OCI-LY7 (cell line): ENCODE measurements at regions of chr14 and their contacts with region 1.

Region 1: DNA sequence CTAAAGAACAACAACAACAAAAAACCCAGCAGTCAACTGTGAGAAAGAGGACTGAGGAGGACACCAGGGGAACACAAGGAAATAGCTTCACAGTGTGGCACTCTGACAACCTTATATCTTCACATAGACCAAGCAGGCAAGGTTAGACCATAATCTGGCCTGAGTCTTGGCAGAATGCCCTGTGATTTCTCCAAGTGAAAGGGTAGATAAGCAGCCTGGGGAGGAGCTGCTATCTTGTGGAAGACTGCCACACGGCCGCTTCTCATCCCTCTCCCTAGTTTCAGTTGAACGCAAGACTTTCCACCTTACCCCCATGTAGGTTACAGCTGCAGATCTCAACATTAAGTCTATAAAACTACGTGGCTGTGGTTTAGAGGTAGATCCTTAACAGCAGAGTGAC is 3.7 kb downstream of the SLC25A21 start:
- DNase-seq: no peak
- H3K4me3 ChIP-seq: no peak overlapping the region
- H3K27ac ChIP-seq: no peak overlapping the region
- H3K4me1 ChIP-seq: no peaks in the 10 kb centered on the region
- CTCF ChIP-seq: no peak

Region 2: DNA sequence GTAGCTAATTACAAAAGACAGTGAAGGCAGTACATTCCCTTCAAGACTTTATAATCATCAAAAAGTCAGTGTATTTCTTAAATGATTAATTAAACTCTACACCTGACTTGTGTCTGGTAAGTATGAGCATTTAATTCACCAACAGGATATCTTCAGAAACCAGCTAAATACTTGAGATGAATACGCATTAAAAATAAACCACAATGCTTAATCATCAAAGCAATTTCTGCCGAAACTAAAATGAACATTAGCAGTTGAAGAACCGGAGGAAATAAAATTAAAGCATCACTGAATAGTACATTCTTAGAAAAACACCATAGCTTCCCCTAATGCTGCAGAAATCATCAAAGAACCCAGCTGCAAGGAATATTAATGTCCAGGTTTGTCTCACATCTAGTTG is 29.0 kb before region 1 on chr14:
- CTCF ChIA-PET with region 1: no interaction called
- POLR2A ChIA-PET with region 1: no interaction called
- intact Hi-C with region 1: loop called (anchors 2 kb)
- DNase-seq: no peak
- H3K4me3 ChIP-seq: no peak overlapping the region
- H3K27ac ChIP-seq: no peak overlapping the region
- H3K4me1 ChIP-seq: no peaks in the 10 kb centered on the region
- CTCF ChIP-seq: no peak

Region 3: DNA sequence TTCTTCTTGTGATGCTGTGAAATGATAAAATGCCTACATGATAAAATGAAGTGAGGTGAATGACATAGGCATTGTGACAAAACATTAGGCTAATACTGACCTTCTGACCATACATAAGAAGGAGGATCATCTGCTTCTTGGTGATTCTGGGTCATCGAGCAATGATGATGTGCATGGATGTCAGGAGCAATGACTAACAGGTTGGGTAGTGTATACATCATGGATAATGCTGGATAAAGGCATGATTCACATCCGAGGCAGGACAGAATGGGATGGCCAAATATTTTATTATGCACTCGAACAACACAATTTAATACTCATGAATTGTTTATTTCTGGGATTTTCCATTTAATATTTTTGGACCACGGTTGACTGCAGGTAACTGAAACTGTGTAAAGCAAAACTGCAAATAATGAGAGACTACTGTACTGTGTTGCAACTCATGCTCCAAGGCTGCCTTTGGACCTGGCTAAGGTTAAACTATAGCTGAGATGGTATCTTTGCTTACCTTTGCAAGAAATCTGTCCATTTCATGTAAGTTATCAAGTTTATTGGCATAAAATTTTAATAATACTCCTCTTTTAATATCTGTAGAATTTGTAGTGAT is 11.3 kb after region 1 on chr14:
- CTCF ChIA-PET with region 1: no interaction called
- POLR2A ChIA-PET with region 1: interaction called, 11 read pairs
- intact Hi-C with region 1: no loop called
- DNase-seq: no peak
- H3K4me3 ChIP-seq: no peak overlapping the region
- H3K27ac ChIP-seq: no peak overlapping the region
- H3K4me1 ChIP-seq: no peaks in the 10 kb centered on the region
- CTCF ChIP-seq: no peak